GM23248 (cell line): ENCODE measurements at regions of chr13 and their contacts with region 1.

Region 1: GRCh38 chr13:110108347-110109174 is 198.4 kb downstream of the COL4A1 start:
- DNase-seq: peak; percentile 94
- H3K4me3 ChIP-seq: no peak overlapping the region
- H3K27ac ChIP-seq: no peak overlapping the region
- H3K4me1 ChIP-seq: peaks cover 31% of the 10 kb centered on the region
- H3K27me3 ChIP-seq: no peaks in the 10 kb centered on the region

Region 2: GRCh38 chr13:108957369-108958012 is 1151.1 kb before region 1 on chr13:
- in situ Hi-C with region 1: loop called (anchors 10 kb)
- DNase-seq: peak; percentile 83
- H3K4me3 ChIP-seq: peak overlapping the region; percentile 20; the same call in 1 of the 2 replicates
- H3K27ac ChIP-seq: peak overlapping the region; percentile 33; the same call in 1 of the 2 replicates
- H3K4me1 ChIP-seq: peaks cover 8% of the 10 kb centered on the region
- H3K27me3 ChIP-seq: no peaks in the 10 kb centered on the region

Region 3: DNA sequence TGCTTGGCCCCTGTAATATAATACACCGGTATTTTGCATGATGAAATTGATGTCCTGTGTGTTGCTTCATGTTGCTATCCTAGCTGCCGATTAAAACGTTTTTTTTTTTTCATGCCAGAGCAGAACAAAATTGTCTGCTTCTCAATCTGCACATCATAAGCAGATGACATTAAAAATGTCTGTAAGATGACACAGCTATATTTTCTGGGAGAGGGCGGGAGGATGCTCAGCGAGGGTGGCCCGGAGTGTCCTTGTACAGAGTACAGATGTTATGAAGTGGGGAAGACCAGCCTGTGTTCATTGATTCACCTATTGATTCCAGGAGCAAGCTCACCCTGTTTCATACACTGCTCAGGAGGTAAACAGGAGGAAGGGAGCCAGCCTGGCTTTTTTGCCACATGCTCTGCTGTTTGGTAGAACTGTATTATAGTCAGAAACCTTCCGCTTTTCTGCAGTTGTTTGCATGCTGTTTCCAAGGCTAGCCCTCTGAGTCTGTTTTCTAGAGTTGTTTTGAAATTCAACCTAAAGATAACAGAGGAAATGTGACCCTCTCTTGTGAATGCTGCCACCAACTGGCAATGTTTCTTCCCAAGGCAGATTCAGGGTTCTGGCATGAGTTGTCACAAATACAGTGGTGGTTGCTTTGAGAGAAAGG is 317.5 kb before region 1 on chr13:
- in situ Hi-C with region 1: loop called (anchors 10 kb)
- DNase-seq: peak; percentile 44
- H3K4me3 ChIP-seq: no peak overlapping the region
- H3K27ac ChIP-seq: 0 out of 2 replicates have a peak overlapping the region, but pooled peaks have one; percentile 1
- H3K4me1 ChIP-seq: peaks cover 22% of the 10 kb centered on the region
- H3K27me3 ChIP-seq: no peaks in the 10 kb centered on the region